ENCODE measurements at regions of chr9 and their contacts with region 1.

Region 1: GRCh38 chr9:16191691-16192402 is 639.0 kb downstream of the CCDC171 start:
- DNase-seq: peak; percentile 49
- H3K4me3 ChIP-seq: no peak overlapping the region
- H3K27ac ChIP-seq: no peak overlapping the region
- H3K4me1 ChIP-seq: no peaks in the 10 kb centered on the region
- H3K27me3 ChIP-seq: no peaks in the 10 kb centered on the region
- CTCF ChIP-seq: peak in 3 of 4 experiments; percentile 74 to 82 (median 79)
- POLR2A ChIP-seq: no peak

Region 2: GRCh38 chr9:16309469-16310271 is 117.8 kb after region 1 on chr9:
- intact Hi-C with region 1: loop called (anchors 10 kb)
- DNase-seq: no peak
- H3K4me3 ChIP-seq: no peak overlapping the region
- H3K27ac ChIP-seq: no peak overlapping the region
- H3K4me1 ChIP-seq: no peaks in the 10 kb centered on the region
- H3K27me3 ChIP-seq: no peaks in the 10 kb centered on the region
- CTCF ChIP-seq: no peak
- POLR2A ChIP-seq: no peak

Region 3: DNA sequence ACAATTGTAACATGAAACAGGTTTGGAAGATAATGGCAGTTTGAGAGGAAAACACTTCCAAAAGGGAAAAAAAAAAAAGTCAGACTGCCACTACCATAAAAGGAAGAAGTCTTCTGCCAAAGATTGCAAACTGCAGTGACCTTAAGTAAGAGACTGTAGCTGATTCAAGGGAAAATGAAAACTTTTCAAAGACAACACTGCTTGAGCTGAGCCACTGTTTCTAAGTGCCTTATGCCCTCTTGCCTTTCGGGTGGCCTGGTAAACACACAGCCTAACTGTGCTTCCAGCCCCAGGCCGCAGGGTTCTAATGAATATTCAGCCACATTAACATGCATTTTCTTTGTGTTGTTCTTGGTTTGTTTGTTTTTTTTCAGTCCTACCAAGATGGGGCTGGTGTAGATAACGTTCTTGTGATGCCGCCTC is 324.0 kb after region 1 on chr9:
- intact Hi-C with region 1: loop called (anchors 10 kb)
- DNase-seq: no peak
- H3K4me3 ChIP-seq: no peak overlapping the region
- H3K27ac ChIP-seq: no peak overlapping the region
- H3K4me1 ChIP-seq: no peaks in the 10 kb centered on the region
- H3K27me3 ChIP-seq: no peaks in the 10 kb centered on the region
- CTCF ChIP-seq: no peak
- POLR2A ChIP-seq: no peak

Region 4: GRCh38 chr9:16726718-16727451 is 535.0 kb after region 1 on chr9:
- intact Hi-C with region 1: loop called (anchors 10 kb)
- DNase-seq: peak; percentile 69
- H3K4me3 ChIP-seq: peak overlapping the region; percentile 40 to 43
- H3K27ac ChIP-seq: peak overlapping the region; percentile 80 to 88
- H3K4me1 ChIP-seq: no peaks in the 10 kb centered on the region
- H3K27me3 ChIP-seq: no peaks in the 10 kb centered on the region
- CTCF ChIP-seq: no peak
- POLR2A ChIP-seq: no peak

Region 5: DNA sequence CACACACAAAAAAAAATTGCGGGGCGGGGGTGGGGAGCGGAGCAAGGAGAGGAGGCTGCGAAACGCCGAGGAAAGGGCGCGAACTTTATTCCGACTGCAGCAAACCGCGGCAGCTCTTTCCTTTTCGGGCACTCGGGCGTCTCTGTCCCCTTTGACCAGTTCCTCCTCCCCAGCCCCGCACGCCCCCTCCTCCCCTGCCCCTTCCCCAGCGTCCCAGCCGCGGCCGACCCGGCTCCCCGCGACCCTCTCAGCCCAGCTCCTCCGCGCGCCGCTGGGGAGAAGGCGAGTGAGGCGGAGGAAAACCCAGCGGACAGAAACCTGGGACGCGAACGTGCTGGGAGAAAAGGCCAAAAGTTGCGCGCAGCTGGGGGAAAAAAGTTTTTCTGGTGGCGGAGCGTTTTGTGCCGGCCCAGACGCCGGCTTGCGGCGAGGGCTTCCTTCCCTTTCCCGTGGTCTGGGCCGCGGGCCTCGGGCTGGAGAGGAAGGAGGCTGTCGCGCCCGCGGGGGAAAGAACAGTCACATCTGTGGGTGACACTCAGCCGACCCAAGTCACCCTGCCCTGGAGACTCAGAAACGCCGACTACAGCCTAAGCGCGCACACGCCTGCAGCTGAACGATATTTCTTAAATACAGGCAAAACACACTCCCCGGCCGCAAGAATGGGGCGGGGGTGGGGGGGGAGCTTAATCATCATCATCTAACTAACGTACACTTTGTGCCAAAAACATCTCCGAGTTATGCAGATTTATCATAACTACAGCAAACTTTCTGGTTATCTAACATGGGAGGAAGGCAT is 679.7 kb after region 1 on chr9:
- intact Hi-C with region 1: loop called (anchors 5 kb)
- DNase-seq: peak; percentile 14
- H3K4me3 ChIP-seq: peak overlapping the region; percentile 52 to 54
- H3K27ac ChIP-seq: peak overlapping the region; percentile 75 to 86
- H3K4me1 ChIP-seq: no peaks in the 10 kb centered on the region
- H3K27me3 ChIP-seq: no peaks in the 10 kb centered on the region
- CTCF ChIP-seq: no peak
- POLR2A ChIP-seq: no peak

Region 6: DNA sequence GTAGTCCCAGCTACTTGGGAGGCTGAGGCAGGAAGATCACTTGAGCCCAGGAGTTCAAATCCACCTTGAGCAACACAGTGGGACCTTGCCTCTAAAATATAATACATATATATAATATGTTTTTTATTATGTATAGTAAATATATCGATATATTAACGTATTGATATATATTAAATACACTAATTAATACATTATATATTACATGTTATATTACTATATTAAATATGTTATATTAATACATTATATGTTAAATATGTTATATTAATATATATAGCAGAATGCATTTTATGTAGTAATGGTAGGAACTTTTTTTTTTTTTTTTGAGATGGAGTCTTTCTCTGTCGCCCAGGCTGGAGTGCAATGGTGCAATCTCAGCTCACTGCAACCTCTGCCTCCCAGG is 696.7 kb after region 1 on chr9:
- intact Hi-C with region 1: no loop called
- DNase-seq: no peak
- H3K4me3 ChIP-seq: no peak overlapping the region
- H3K27ac ChIP-seq: no peak overlapping the region
- H3K4me1 ChIP-seq: no peaks in the 10 kb centered on the region
- H3K27me3 ChIP-seq: no peaks in the 10 kb centered on the region
- CTCF ChIP-seq: no peak
- POLR2A ChIP-seq: no peak

Measured in prostate gland (tissue), 2 donors.